ENCODE measurements at regions of chr9 and their contacts with region 1.

Region 1: GRCh38 chr9:68437785-68438184 is 81.4 kb downstream of the PGM5 start:
- DNase-seq: no peak
- ATAC-seq: no peak
- H3K4me3 ChIP-seq: no peak overlapping the region
- H3K4me3 Mint-ChIP-seq: no peak overlapping the region
- H3K27ac ChIP-seq: no peak overlapping the region
- H3K27ac Mint-ChIP-seq: no peak overlapping the region
- H3K4me1 ChIP-seq: no peaks in the 10 kb centered on the region
- H3K4me1 Mint-ChIP-seq: no peaks in the 10 kb centered on the region
- H3K27me3 ChIP-seq: no peaks in the 10 kb centered on the region
- H3K27me3 Mint-ChIP-seq: peaks cover 14% of the 10 kb centered on the region
- CTCF ChIP-seq: no peak

Region 2: DNA sequence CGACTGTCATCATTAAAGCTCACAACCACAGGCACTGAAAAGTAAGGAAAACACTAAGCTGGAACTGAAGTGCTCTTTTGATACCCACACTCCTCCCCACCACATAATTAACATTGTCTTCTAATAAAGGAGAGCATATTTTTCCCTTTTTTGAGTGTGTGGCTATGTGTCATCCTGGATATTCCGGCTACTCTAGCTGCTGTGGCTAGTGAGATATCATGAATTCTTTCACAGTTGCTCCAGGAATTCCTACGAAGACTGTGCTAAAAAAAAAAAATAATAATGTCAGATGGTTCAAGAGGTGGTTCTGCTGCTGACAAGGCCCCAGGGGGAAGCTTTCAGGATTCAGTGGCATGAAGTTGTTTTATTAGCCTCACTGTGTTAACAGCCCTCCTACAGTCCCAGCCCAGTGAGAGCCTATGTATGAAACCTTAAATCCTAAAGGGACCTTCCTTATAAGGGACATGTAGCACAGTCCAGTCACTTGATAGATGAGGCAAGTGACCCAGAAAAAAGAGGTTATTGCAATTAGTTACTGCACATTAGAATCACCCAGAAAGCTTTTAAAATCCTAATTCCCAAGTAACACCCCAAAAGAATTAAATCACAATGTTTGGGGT is 56.3 kb after region 1 on chr9:
- CTCF ChIA-PET with region 1: no interaction called
- POLR2A ChIA-PET with region 1: no interaction called
- intact Hi-C with region 1: loop called in 1 of 2 experiments (anchors 10 kb)
- DNase-seq: no peak
- ATAC-seq: no peak
- H3K4me3 ChIP-seq: no peak overlapping the region
- H3K4me3 Mint-ChIP-seq: no peak overlapping the region
- H3K27ac ChIP-seq: no peak overlapping the region
- H3K27ac Mint-ChIP-seq: no peak overlapping the region
- H3K4me1 ChIP-seq: no peaks in the 10 kb centered on the region
- H3K4me1 Mint-ChIP-seq: no peaks in the 10 kb centered on the region
- H3K27me3 ChIP-seq: no peaks in the 10 kb centered on the region
- H3K27me3 Mint-ChIP-seq: peaks cover 2% of the 10 kb centered on the region
- CTCF ChIP-seq: no peak

Measured in CD8-positive, alpha-beta T cell (primary cell).